OCI-LY7 (cell line): ENCODE measurements at regions of chr16 and their contacts with region 1.

Region 1: DNA sequence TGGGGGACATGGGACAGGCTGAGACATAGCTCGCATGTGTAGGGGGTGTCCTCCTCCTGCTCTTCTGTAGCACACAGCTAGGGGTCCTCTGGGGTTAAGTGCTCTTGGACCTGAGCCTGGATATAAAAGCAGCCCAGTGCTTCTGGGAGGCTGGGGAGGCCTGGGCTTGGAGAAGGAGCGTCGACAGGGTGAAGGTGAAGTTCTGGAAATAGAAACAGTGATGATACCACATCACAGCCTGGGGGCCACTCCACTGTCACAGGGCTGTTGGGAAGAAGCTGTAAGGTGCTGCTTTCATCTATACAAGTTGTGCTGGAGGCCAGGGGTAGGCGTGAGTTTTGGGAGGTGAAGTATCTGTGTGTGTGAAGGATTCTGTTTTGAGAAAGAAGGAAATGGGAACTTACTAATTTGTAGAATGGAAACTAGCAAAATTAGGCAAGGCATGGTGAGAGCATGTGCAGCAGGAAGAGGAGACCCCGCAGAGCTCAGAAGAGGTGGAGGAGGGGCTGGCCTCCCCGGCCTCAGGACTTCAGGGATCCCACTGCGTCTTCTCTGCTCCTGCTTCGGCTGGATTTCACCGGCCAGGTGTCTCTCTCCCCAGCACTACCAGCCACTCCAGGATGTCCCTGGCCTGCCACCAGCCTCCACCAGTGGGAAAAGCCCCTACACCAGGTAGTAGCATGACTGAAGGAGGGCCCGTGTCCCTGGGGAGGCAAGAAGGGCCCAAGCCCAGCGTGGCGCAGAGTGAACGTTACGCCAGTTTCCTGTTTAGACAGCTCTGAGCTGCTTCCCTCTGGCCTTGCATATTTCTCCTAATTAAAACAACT is 19.4 kb downstream of the PLCG2 start:
- DNase-seq: peak; percentile 96
- H3K4me3 ChIP-seq: peak overlapping the region; percentile 51
- H3K27ac ChIP-seq: peak overlapping the region; percentile 95
- H3K4me1 ChIP-seq: peaks cover 94% of the 10 kb centered on the region
- CTCF ChIP-seq: peak; percentile 57

Region 2: GRCh38 chr16:81632392-81633146 is 166.0 kb before region 1 on chr16:
- CTCF ChIA-PET with region 1: no interaction called
- POLR2A ChIA-PET with region 1: no interaction called
- intact Hi-C with region 1: no loop called
- DNase-seq: no peak
- H3K4me3 ChIP-seq: no peak overlapping the region
- H3K27ac ChIP-seq: no peak overlapping the region
- H3K4me1 ChIP-seq: no peaks in the 10 kb centered on the region
- CTCF ChIP-seq: no peak

Region 3: GRCh38 chr16:81786321-81786720 is 12.2 kb before region 1 on chr16:
- CTCF ChIA-PET with region 1: interaction called, 3 read pairs
- POLR2A ChIA-PET with region 1: interaction called, 11 read pairs
- intact Hi-C with region 1: loop called (anchors 1 kb)
- DNase-seq: peak; percentile 50
- H3K4me3 ChIP-seq: peak overlapping the region; percentile 76
- H3K27ac ChIP-seq: peak overlapping the region; percentile 92
- H3K4me1 ChIP-seq: peaks cover 86% of the 10 kb centered on the region
- CTCF ChIP-seq: no peak

Region 4: GRCh38 chr16:81808933-81809496 is 10.5 kb after region 1 on chr16:
- CTCF ChIA-PET with region 1: interaction called, 5 read pairs
- POLR2A ChIA-PET with region 1: interaction called, 8 read pairs
- intact Hi-C with region 1: loop called (anchors 1 kb)
- DNase-seq: peak; percentile 95
- H3K4me3 ChIP-seq: peak overlapping the region; percentile 50
- H3K27ac ChIP-seq: peak overlapping the region; percentile 95
- H3K4me1 ChIP-seq: peaks cover 92% of the 10 kb centered on the region
- CTCF ChIP-seq: no peak

Region 5: DNA sequence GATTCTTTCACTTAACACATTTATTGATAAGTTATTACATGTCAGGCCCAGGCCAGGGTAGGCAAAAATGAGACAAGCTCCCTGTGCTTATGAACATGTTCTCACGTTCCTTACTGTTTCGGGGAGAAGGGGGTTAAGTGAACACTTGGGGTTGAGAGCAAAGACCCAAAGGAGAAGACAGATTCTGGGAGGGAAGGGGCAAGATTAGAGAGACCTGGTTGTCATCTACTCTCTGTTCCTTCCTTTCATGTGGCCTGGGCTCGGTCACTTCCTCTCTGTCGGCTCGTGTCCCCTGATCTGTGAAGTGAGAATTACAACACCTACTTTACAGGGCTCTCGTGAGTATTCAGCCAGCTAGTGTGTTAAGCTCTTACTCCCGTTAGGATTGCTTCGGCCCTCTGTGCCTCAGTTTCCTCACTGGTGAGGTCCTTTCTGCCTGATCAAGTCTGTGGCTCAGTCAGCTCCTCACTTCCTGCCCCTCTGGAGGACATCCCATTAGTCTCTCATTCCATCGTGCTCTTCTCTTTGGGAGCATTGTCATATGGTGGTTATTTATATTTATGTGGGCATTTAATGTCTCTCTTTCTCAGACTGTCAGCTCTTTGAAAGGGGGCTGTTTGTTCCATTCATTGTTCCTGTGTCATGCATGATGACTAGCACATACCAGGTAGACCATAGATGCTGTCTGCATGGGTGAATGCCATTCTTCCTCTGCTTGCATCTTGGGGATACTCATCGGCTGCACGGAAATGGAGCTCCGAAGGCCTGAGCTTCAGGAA is 19.5 kb after region 1 on chr16:
- CTCF ChIA-PET with region 1: interaction called, 11 read pairs
- POLR2A ChIA-PET with region 1: interaction called, 21 read pairs
- intact Hi-C with region 1: loop called (anchors 1 kb)
- DNase-seq: peak; percentile 88
- H3K4me3 ChIP-seq: peak overlapping the region; percentile 64
- H3K27ac ChIP-seq: peak overlapping the region; percentile 97
- H3K4me1 ChIP-seq: peaks cover 95% of the 10 kb centered on the region
- CTCF ChIP-seq: no peak

Region 6: GRCh38 chr16:81823111-81823510 is 24.6 kb after region 1 on chr16:
- CTCF ChIA-PET with region 1: interaction called, 11 read pairs
- POLR2A ChIA-PET with region 1: interaction called, 21 read pairs
- intact Hi-C with region 1: loop called (anchors 1 kb)
- DNase-seq: peak; percentile 91
- H3K4me3 ChIP-seq: peak overlapping the region; percentile 64
- H3K27ac ChIP-seq: peak overlapping the region; percentile 97
- H3K4me1 ChIP-seq: peaks cover 94% of the 10 kb centered on the region
- CTCF ChIP-seq: 0 out of 2 replicates have a peak, but pooled peaks have one; percentile 18